Body of pancreas (tissue), 4 donors: ENCODE measurements at regions of chr1 and their contacts with region 1.

Region 1: GRCh38 chr1:209692745-209693504 is 11.7 kb upstream of the HSD11B1 start:
- DNase-seq: peak; percentile 74 to 80 (median 76)
- ATAC-seq: peak; percentile 68
- H3K4me3 ChIP-seq: no peak overlapping the region
- H3K27ac ChIP-seq: no peak overlapping the region
- H3K4me1 ChIP-seq: peaks cover 6% of the 10 kb centered on the region
- H3K27me3 ChIP-seq: no peaks in the 10 kb centered on the region
- CTCF ChIP-seq: peak; percentile 62 to 91 (median 89)
- POLR2A ChIP-seq: no peak

Region 2: DNA sequence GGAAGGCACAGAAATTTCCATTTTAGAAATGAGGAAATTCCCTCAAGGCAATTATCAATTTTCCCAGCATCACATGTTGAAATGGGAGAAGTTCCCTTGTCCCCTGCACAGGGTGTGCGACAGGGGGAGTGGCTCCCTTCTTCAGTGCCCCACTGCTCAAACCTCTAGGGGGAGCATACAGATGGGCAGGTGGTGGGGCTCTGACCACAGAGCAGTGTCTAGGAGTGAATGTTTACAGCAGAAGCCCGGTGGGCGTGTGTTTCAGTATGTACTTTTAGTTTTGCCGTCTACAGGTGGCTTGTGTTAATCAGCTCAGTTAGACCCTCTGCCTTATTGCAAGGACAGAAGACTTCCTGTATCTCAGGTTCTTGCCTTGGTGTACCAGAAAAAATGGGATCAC is 955.0 kb before region 1 on chr1:
- intact Hi-C with region 1: no loop called
- DNase-seq: no peak
- ATAC-seq: no peak
- H3K4me3 ChIP-seq: no peak overlapping the region
- H3K27ac ChIP-seq: no peak overlapping the region
- H3K4me1 ChIP-seq: no peaks in the 10 kb centered on the region
- H3K27me3 ChIP-seq: no peaks in the 10 kb centered on the region
- CTCF ChIP-seq: no peak
- POLR2A ChIP-seq: no peak

Region 3: GRCh38 chr1:209576798-209577197 is 116.1 kb before region 1 on chr1:
- intact Hi-C with region 1: loop called (anchors 5 kb)
- DNase-seq: peak; percentile 79 to 87 (median 82)
- ATAC-seq: peak; percentile 98
- H3K4me3 ChIP-seq: no peak overlapping the region
- H3K27ac ChIP-seq: no peak overlapping the region
- H3K4me1 ChIP-seq: no peaks in the 10 kb centered on the region
- H3K27me3 ChIP-seq: no peaks in the 10 kb centered on the region
- CTCF ChIP-seq: peak; percentile 78 to 92 (median 89)
- POLR2A ChIP-seq: no peak

Region 4: DNA sequence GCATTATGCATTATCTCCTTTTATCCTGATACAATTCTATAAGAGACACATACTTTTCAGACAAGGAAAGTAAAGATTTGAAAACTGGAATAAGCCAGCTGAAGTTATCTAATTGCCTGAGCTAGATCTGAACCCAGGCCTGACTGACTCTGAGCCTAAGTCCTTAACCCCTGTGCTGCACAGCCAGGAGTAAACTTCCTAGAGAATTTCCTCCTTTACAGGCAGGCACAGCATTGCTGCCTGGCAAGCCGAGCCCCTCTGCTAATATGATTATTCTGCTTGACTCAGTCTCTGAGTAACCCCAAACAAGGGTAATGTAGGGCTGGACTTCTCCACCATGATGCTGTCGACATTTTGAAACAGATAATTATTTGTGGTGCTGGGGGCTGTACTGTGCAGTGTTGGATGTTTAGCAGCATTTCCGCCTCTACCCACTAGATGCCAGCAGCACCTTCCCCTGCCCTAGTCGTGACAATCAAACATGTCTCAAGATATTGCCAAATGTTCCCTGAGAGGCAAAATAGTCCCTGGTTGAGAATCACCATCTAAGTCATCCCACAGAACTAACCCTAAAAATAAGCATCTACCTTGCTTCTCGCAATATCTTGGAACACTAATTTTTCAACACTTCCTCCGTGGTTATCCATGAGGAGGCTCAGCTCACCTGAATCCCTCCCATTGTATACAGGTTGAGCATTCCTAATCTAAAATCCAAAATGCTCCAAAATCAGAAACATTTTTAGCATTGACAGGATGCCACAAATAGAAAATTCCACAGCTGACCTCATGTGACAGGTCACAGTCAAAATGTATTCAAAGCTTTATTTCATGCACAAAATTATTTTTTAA is 90.9 kb before region 1 on chr1:
- intact Hi-C with region 1: loop called (anchors 5 kb)
- DNase-seq: peak; percentile 44 to 63 (median 48)
- ATAC-seq: peak; percentile 82
- H3K4me3 ChIP-seq: no peak overlapping the region
- H3K27ac ChIP-seq: no peak overlapping the region
- H3K4me1 ChIP-seq: no peaks in the 10 kb centered on the region
- H3K27me3 ChIP-seq: no peaks in the 10 kb centered on the region
- CTCF ChIP-seq: peak; percentile 50 to 89 (median 85)
- POLR2A ChIP-seq: no peak